Heart left ventricle (tissue), 16 donors: ENCODE measurements at regions of chr7 and their contacts with region 1.

Region 1: DNA sequence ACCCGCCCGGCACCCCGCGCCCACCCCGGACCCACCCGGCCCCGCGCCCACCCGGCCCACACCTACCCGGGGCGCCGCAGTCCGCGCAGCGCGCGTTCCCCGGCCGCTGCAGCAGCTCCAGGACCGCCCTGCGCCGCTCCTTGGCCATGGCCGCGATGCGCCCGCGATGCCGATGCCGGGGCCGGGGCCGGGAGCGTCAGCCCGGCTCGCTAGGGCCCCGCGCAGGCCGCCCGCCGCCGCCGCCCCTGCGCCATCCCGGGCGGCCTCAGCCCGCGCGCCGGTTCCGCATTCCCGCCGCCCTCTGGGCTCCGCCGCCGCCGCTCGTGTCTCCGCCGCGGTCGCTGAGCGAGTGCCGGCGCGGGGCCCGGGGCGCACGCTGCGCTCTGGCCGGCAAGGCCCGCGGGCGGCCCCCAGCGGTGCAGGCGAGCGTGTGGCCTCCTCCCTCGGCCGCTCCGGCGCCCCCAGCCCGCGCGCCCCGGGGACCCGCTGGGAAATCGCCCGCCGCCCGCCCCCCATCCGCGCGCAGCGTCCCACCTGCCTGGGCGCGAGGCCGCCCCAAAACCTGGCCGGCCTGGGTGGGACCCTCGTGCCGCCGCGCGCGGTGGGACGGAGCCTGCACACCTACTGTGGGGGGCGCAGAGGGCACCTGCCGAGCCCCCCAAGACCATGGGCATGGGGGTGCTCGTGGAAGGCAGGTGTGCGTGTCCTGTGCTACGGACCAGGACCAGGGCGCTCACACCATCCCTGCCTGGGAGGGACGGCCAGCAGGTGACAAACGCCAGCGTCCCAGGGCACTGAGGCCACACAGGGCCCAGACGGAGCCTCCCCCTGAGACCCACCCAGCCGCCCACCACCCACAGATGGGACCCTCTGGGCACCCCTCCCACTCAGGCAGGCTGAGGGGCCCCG is at the start of gene ADAP1:
- DNase-seq: peak in 4 of 5 donors; percentile 45 to 78 (median 61)
- ATAC-seq: peak in 3 of 4 donors; percentile 50 to 62 (median 57)
- H3K4me3 ChIP-seq: peak within 1 kb of the TSS; percentile 34 to 73 (median 57)
- H3K27ac ChIP-seq: peak within 1 kb of the TSS in 6 of 12 donors; percentile 14 to 79 (median 42)
- H3K4me1 ChIP-seq: peaks cover 0 to 44% (median 9%) of the 10 kb centered on the region in 12 donors
- H3K27me3 ChIP-seq: peaks cover 0 to 27% (median 8%) of the 10 kb centered on the region in 9 donors
- CTCF ChIP-seq: peak in 5 of 12 donors; percentile 4 to 41 (median 16)
- POLR2A ChIP-seq: no peak
- total RNA-seq, gene ADAP1: 7.0 to 16.5 (median 12.0) TPM

Region 2: GRCh38 chr7:780081-780480 is 174.5 kb before region 1 on chr7:
- intact Hi-C with region 1: loop called in 1 of 10 experiments (anchors 5 kb)
- DNase-seq: peak; percentile 54 to 77 (median 61)
- ATAC-seq: peak; percentile 68 to 80 (median 75)
- H3K4me3 ChIP-seq: no peak overlapping the region
- H3K27ac ChIP-seq: peak overlapping the region in 11 of 12 donors; percentile 46 to 88 (median 68)
- H3K4me1 ChIP-seq: peaks cover 0 to 31% (median 6%) of the 10 kb centered on the region in 12 donors
- H3K27me3 ChIP-seq: no peaks in the 10 kb centered on the region
- CTCF ChIP-seq: no peak
- POLR2A ChIP-seq: no peak